Colonic mucosa (tissue), 4 donors: ENCODE measurements at regions of chr9 and their contacts with region 1.

Region 1: DNA sequence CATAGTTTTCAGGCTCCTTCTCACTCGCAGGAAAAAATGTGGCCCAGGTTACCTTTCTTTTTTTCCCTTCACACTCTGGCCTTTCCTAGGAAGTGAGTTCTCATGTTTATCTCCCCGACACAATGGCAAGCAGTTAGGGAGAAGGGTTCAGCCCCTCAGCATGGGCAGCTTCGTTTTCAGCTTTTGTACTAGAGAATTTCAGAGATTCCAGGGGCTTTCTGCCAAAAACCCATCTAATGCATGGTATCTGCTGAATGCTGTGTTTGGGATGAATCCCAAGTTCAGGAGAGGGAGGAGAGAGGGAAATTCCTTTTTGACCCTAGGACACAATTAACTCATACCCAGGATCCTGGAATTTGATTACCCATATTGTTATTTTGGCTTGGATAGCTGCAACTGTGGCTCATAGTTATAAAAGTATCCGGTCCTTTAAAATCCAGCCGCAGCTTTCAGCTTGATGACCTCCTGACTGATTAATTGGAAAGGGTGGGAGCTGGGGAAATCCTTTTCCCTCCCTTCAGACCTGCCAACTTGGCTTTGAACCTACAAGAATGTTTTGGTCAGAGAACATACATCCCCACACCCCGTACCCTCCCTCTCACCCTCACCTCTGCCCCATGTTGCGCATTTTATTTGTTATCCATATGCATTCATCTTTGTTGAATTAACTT is 78.4 kb downstream of the TMEM252 start:
- DNase-seq: no peak
- H3K4me3 ChIP-seq: no peak overlapping the region
- H3K27ac ChIP-seq: no peak overlapping the region
- H3K4me1 ChIP-seq: no peaks in the 10 kb centered on the region
- H3K27me3 ChIP-seq: no peaks in the 10 kb centered on the region
- CTCF ChIP-seq: no peak

Region 2: DNA sequence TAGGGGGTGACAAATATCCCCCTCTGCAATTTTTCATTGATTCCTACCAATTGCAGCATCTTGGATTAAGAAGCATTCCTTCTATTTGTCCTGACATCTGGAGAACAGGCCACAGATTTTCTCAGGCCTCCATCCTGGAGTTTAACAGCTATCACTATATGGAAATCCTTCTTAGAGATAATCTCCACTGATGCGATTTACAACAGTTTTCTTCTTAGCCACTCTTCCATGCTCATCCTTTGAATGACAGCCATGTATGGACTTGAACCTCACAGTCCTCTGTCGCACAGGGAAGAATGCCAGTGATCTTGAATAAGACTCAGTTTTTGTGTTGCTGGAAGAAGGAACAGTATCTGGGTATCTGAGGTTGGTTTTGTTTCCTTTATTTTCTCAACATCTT is 32.6 kb before region 1 on chr9:
- intact Hi-C with region 1: loop called (anchors 5 kb)
- DNase-seq: no peak
- H3K4me3 ChIP-seq: no peak overlapping the region
- H3K27ac ChIP-seq: no peak overlapping the region
- H3K4me1 ChIP-seq: no peaks in the 10 kb centered on the region
- H3K27me3 ChIP-seq: no peaks in the 10 kb centered on the region
- CTCF ChIP-seq: no peak